ENCODE measurements at regions of chr11 and their contacts with region 1.

Region 1: DNA sequence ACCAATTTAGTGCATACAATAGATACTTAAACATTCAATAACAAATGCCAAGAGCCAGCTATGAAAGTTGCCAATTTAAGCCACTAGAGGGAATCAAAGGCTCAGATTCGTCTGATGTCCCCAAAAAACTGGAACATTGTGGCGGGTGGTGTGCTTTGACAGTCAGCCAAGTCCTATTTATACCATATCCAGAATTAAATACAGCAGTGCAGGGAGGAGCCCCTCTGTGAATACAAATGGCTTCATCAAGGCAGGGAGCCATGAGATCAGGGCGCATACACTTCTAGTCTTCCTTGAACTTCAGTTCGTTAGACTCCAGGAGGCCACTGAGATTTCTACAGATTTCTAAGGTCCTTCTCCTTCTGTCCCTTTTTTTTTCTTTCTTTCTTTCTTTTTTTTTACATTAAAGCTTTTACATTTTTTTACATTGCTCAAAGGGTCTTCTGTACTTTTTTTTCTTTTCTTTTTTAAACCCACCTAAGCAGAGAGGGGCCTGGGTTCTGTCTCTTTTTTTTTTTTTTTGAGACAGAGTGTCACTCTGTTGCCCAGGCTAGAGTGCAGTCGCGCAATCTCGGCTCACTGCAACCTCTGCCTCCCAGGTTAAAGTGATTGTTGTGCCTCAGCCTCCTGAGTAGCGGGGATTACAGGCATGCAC is 41.5 kb upstream of the HSPA8 start:
- DNase-seq: peak in 10 of 14 experiments; percentile 12 to 73 (median 24)
- ATAC-seq: peak; percentile 75
- H3K4me3 ChIP-seq: no peak overlapping the region
- H3K4me3 Mint-ChIP-seq: no peak overlapping the region
- H3K27ac ChIP-seq: no peak overlapping the region
- H3K27ac Mint-ChIP-seq: peak overlapping the region; percentile 52
- H3K4me1 ChIP-seq: peaks cover 26% of the 10 kb centered on the region
- H3K4me1 Mint-ChIP-seq: peaks cover 30% of the 10 kb centered on the region
- H3K27me3 ChIP-seq: no peaks in the 10 kb centered on the region
- H3K27me3 Mint-ChIP-seq: no peaks in the 10 kb centered on the region
- CTCF ChIP-seq: peak; percentile 69

Region 2: GRCh38 chr11:122832721-122833470 is 270.6 kb before region 1 on chr11:
- CTCF ChIA-PET with region 1: no interaction called
- POLR2A ChIA-PET with region 1: no interaction called
- intact Hi-C with region 1: no loop called
- DNase-seq: peak in 1 of 14 experiments; percentile 33
- ATAC-seq: no peak
- H3K4me3 ChIP-seq: no peak overlapping the region
- H3K4me3 Mint-ChIP-seq: peak overlapping the region; percentile 12
- H3K27ac ChIP-seq: no peak overlapping the region
- H3K27ac Mint-ChIP-seq: peak overlapping the region; percentile 3
- H3K4me1 ChIP-seq: peaks cover 4% of the 10 kb centered on the region
- H3K4me1 Mint-ChIP-seq: peaks cover 11% of the 10 kb centered on the region
- H3K27me3 ChIP-seq: no peaks in the 10 kb centered on the region
- H3K27me3 Mint-ChIP-seq: no peaks in the 10 kb centered on the region
- CTCF ChIP-seq: no peak

Region 3: GRCh38 chr11:123069908-123070821 is 33.3 kb before region 1 on chr11:
- CTCF ChIA-PET with region 1: interaction called, 4 read pairs
- POLR2A ChIA-PET with region 1: interaction called, 226 read pairs
- intact Hi-C with region 1: no loop called
- DNase-seq: peak in 3 of 14 experiments; percentile 67 to 87 (median 69)
- ATAC-seq: peak; percentile 87
- H3K4me3 ChIP-seq: peak overlapping the region; percentile 52
- H3K4me3 Mint-ChIP-seq: peak overlapping the region; percentile 90
- H3K27ac ChIP-seq: peak overlapping the region; percentile 87 to 96
- H3K27ac Mint-ChIP-seq: peak overlapping the region; percentile 96
- H3K4me1 ChIP-seq: peaks cover 66% of the 10 kb centered on the region
- H3K4me1 Mint-ChIP-seq: peaks cover 65% of the 10 kb centered on the region
- H3K27me3 ChIP-seq: no peaks in the 10 kb centered on the region
- H3K27me3 Mint-ChIP-seq: no peaks in the 10 kb centered on the region
- CTCF ChIP-seq: no peak

Region 4: DNA sequence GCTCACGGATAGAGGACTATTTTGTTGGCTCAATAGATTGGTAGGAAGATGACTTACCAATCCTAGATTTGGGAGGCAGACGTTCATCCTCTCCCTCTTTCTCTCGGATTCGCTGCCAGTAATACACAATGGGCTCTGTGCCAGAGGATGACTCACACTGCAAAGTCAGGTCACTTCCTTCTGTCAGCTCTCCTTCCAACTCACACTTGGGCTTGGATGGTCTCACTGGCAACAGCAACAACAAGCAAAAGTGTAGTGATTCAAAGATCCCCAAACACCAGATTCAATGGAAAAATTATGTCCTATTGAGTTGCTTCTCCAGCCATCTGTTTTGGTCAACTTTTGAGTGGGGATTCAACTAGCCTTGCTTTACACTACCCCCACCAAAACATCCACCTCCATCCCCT is 19.8 kb before region 1 on chr11:
- CTCF ChIA-PET with region 1: interaction called, 6 read pairs
- POLR2A ChIA-PET with region 1: interaction called, 24 read pairs
- intact Hi-C with region 1: loop called in 1 of 2 experiments (anchors 2 kb)
- DNase-seq: peak; percentile 42 to 90 (median 70)
- ATAC-seq: peak; percentile 35
- H3K4me3 ChIP-seq: no peak overlapping the region
- H3K4me3 Mint-ChIP-seq: peak overlapping the region; percentile 54
- H3K27ac ChIP-seq: peak overlapping the region in 1 of 2 donors; percentile 21
- H3K27ac Mint-ChIP-seq: peak overlapping the region; percentile 79
- H3K4me1 ChIP-seq: peaks cover 53% of the 10 kb centered on the region
- H3K4me1 Mint-ChIP-seq: peaks cover 46% of the 10 kb centered on the region
- H3K27me3 ChIP-seq: no peaks in the 10 kb centered on the region
- H3K27me3 Mint-ChIP-seq: no peaks in the 10 kb centered on the region
- CTCF ChIP-seq: no peak

Region 5: GRCh38 chr11:123246749-123247495 is 143.5 kb after region 1 on chr11:
- CTCF ChIA-PET with region 1: interaction called, 14 read pairs
- POLR2A ChIA-PET with region 1: interaction called, 8 read pairs
- intact Hi-C with region 1: loop called in 1 of 2 experiments (anchors 2 kb)
- DNase-seq: peak; percentile 70 to 89 (median 79)
- ATAC-seq: peak; percentile 92
- H3K4me3 ChIP-seq: no peak overlapping the region
- H3K4me3 Mint-ChIP-seq: no peak overlapping the region
- H3K27ac ChIP-seq: no peak overlapping the region
- H3K27ac Mint-ChIP-seq: no peak overlapping the region
- H3K4me1 ChIP-seq: peaks cover 7% of the 10 kb centered on the region
- H3K4me1 Mint-ChIP-seq: no peaks in the 10 kb centered on the region
- H3K27me3 ChIP-seq: no peaks in the 10 kb centered on the region
- H3K27me3 Mint-ChIP-seq: no peaks in the 10 kb centered on the region
- CTCF ChIP-seq: peak; percentile 95

Measured in CD4-positive, alpha-beta T cell (primary cell).